ENCODE measurements at regions of chr15 and their contacts with region 1.

Region 1: DNA sequence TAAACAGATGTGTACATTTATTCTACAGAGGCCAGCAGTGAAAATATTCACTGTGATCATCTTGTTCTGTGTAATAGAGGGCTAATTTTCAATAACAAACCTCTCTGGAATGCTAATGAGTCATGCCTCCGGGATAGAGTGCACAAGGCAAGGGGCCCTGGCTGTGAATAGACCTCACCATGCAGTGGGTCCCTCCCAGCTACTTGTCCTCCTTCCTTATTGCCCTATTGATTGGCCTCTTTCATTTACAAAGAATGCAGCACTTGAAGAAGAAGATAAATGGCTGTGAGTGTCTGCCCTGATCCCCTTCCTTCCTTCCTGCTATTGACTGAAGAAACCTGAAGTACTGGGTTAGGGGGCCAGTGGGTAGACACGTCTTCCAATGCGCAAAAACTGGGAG is 436.3 kb downstream of the WDR72 start:
- DNase-seq: peak; percentile 74
- H3K4me3 Mint-ChIP-seq: no peak overlapping the region
- H3K27ac Mint-ChIP-seq: peak overlapping the region; percentile 14
- H3K4me1 Mint-ChIP-seq: peaks cover 14% of the 10 kb centered on the region
- H3K27me3 Mint-ChIP-seq: no peaks in the 10 kb centered on the region
- CTCF ChIP-seq: no peak

Region 2: DNA sequence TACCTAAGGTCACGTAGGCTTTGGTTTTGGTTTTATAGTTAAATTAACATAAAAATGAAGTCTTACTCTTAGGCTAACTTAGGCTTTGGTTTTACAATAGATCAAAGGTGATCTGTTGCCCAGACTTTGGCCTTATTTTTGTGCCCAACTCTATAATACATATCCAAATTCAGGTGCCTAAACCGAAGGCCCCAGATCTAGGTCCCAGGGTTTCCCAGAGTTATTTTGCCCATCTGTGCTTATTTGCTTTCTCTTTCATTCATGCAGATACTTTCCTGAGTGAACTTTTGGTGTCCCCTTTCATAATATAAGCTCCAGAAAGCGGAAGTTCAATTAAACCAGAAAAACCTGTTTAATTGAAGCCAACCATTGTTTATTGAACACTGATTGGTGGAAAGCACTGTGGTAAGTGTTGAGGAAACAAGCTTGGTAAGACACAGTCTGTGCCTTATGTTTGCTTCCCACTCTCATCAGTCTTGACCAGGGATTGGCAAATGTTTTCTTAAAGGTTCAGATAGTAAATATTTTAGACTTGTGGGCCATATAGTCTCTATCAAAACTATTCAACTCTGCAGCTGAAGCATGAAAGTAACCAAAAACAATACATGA is 226.6 kb after region 1 on chr15:
- CTCF ChIA-PET with region 1: no interaction called
- intact Hi-C with region 1: loop called (anchors 10 kb)
- DNase-seq: peak; percentile 26
- H3K4me3 Mint-ChIP-seq: no peak overlapping the region
- H3K27ac Mint-ChIP-seq: peak overlapping the region; percentile 92
- H3K4me1 Mint-ChIP-seq: peaks cover 55% of the 10 kb centered on the region
- H3K27me3 Mint-ChIP-seq: no peaks in the 10 kb centered on the region
- CTCF ChIP-seq: no peak